ENCODE measurements at regions of chr9 and their contacts with region 1.

Region 1: DNA sequence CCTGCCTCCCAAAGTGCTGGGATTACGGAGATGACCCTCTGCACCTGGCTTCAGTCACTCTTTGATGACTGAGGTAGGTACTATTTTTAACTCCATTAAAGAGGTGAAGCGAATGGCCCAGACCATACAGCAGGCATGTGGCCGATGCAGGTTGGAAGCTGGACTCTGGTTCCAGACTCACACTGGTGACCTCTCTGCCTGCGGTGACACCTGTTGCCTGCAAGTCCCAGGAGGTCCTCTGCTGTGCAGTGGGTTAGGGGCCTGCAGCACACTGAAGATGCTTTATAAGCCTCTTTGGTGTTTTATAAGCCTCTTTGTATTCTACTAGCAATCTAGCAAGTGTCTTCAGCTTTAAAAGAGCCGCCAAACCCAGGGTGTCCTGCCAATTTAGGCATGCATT is 49.2 kb upstream of the PTCH1 start:
- DNase-seq: no peak
- ATAC-seq: no peak
- H3K4me3 ChIP-seq: no peak overlapping the region
- H3K27ac ChIP-seq: no peak overlapping the region
- H3K4me1 ChIP-seq: peaks cover 0 to 10% (median 0%) of the 10 kb centered on the region in 9 donors
- H3K27me3 ChIP-seq: peaks cover 4 to 59% (median 49%) of the 10 kb centered on the region in 7 donors
- CTCF ChIP-seq: no peak

Region 2: GRCh38 chr9:95545831-95546567 is 20.0 kb before region 1 on chr9:
- intact Hi-C with region 1: loop called in 1 of 10 experiments (anchors 1 kb)
- DNase-seq: no peak
- ATAC-seq: no peak
- H3K4me3 ChIP-seq: no peak overlapping the region
- H3K27ac ChIP-seq: no peak overlapping the region
- H3K4me1 ChIP-seq: no peaks in the 10 kb centered on the region
- H3K27me3 ChIP-seq: peaks cover 0 to 24% (median 0%) of the 10 kb centered on the region in 7 donors
- CTCF ChIP-seq: no peak

Region 3: GRCh38 chr9:96186591-96187011 is 620.6 kb after region 1 on chr9:
- intact Hi-C with region 1: loop called in 1 of 10 experiments (anchors 10 kb)
- DNase-seq: no peak
- ATAC-seq: no peak
- H3K4me3 ChIP-seq: no peak overlapping the region
- H3K27ac ChIP-seq: no peak overlapping the region
- H3K4me1 ChIP-seq: peaks cover 0 to 6% (median 0%) of the 10 kb centered on the region in 9 donors
- H3K27me3 ChIP-seq: peaks cover 0 to 51% (median 25%) of the 10 kb centered on the region in 7 donors
- CTCF ChIP-seq: no peak

Measured in heart right ventricle (tissue), 16 donors.